Vagina (tissue), 2 donors: ENCODE measurements at regions of chr13 and their contacts with region 1.

Region 1: DNA sequence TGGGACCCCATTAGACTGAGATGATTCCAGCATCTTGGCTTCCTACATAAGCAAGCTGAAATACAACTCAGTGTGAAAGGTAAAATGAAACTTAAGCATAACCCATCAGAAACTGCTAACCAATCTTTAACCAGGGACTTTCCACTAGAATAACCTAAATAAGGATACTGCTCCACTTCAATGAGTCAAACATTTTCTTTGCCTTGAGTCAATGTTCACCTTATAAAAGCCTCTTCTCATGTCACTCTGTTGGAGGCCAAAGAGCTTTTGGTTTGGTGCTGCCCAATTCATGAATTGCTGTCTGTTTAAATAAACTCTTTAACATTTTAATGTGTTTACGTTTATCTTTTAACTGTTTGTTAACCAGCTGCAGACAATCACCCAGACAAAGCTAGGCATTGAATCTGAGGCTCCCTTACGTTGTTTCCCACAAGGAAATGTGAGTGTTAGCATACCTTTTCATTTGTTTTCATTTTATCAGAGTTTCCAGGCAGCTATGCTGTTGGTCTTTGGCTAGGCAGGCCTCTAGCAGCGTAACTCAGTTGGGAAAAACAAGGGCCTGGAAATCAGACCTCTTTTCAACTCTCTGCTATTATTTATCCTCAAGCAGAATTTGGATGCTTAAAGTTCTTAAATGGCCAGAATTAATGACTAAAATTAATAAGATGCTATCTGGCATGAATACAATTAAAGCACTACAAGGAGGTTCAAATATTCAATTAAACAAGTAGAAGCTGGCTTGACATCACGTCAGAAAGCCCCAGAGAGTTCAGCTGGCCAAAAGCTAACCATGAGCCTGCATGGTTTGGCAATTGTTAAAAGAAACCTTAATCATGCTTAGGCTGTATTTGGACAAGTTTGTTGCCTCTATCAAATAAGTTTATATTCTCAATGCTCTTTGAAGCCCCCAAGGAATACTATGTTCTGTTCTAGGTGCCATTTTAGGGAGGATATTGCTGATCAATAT is 200.2 kb downstream of the DCLK1 start:
- DNase-seq: no peak
- H3K4me3 ChIP-seq: no peak overlapping the region
- H3K27ac ChIP-seq: peak overlapping the region; percentile 14
- H3K4me1 ChIP-seq: peaks cover 25% of the 10 kb centered on the region
- H3K27me3 ChIP-seq: no peaks in the 10 kb centered on the region
- CTCF ChIP-seq: no peak
- POLR2A ChIP-seq: no peak

Region 2: DNA sequence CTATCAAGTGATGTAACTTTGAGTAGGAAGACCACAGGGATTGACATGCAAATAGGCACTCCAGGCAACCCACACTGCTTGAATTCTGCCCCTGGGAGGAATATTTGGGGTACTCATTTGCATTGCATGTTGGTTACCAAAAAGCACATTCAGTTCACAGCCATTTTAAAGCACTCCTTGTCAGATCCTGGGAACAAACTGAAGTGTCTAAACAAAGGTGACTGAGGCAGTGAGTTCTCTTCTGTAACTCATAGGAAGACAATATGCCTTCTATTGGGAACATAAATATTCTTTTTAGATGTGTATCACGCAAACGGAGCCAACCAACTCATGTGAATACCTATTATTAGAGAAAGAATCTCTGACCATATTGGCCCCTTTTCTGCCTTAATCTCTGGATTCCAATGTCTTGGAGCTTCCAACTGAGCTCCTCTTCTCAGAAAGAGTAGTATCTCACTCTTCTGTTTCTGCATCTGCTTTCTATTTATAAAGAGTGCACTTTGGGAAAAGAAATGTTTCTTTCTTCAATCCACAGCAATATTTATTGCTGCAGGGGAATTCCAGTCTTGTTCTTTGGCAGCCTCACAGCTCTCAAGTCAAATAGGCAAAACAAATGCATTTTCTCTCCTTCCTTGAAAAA is 1114.6 kb before region 1 on chr13:
- intact Hi-C with region 1: no loop called
- DNase-seq: no peak
- H3K4me3 ChIP-seq: no peak overlapping the region
- H3K27ac ChIP-seq: peak overlapping the region; percentile 63
- H3K4me1 ChIP-seq: peaks cover 15% of the 10 kb centered on the region
- H3K27me3 ChIP-seq: no peaks in the 10 kb centered on the region
- CTCF ChIP-seq: no peak
- POLR2A ChIP-seq: no peak

Region 3: DNA sequence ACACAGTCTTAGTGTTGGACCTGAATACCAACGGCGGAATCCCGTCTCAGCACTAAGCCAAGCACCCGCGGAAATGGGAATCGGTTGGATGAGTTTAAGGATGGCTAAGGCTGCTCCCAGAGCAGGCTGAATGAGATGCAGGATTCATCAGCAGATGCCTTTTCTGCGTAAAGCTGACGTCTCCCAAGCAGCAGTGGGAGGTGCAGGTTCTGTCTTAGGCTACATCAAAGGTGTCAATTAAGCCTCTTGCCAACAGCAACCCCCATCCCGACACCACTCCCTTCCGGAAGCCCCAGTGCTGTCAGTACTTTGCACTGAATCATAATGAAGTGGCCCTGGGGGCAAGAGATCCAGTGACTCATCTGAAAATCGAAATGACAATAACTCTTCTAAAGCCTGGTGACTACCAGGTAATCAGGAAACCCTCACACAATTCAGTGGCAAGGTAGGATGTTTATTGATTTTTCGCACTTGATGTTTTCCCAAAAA is 75.4 kb before region 1 on chr13:
- intact Hi-C with region 1: loop called (anchors 10 kb)
- DNase-seq: no peak
- H3K4me3 ChIP-seq: no peak overlapping the region
- H3K27ac ChIP-seq: no peak overlapping the region
- H3K4me1 ChIP-seq: peaks cover 37% of the 10 kb centered on the region
- H3K27me3 ChIP-seq: no peaks in the 10 kb centered on the region
- CTCF ChIP-seq: no peak
- POLR2A ChIP-seq: no peak

Region 4: DNA sequence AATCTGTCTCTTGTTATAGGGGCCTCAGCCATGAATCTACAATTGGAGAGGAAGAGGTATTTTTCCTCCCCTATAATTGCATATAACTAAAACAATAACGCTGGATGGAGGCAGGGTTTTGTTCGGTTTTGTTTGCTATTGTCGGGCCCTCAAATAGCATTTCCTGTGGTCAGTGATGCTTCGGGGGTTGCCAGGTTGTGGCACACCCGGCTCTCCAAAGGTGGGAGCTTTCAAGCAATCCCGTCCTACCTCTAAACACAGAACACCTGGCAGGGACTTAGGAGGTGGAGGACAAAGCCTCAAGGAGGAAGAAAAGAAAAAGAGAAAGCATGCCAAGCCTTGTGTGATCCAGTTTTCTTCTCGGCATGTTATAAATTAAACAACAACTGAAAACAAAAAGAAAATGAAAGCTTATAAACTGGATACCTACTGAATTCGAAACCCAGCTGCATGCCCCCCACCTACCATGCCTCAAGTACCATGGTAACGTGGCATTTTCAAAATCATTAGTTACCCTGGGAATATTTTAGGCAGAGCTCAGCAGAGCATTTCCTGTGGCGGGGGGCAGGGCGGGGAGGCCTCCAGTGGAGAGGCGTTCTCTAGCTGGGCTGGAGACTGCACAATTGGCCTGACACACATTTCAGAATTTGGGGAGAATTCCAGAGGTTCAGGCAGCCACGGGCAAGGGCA is 13.6 kb before region 1 on chr13:
- intact Hi-C with region 1: no loop called
- DNase-seq: no peak
- H3K4me3 ChIP-seq: peak overlapping the region in 1 of 2 donors; percentile 0
- H3K27ac ChIP-seq: peak overlapping the region; percentile 61
- H3K4me1 ChIP-seq: peaks cover 33% of the 10 kb centered on the region
- H3K27me3 ChIP-seq: no peaks in the 10 kb centered on the region
- CTCF ChIP-seq: no peak
- POLR2A ChIP-seq: no peak

Region 5: DNA sequence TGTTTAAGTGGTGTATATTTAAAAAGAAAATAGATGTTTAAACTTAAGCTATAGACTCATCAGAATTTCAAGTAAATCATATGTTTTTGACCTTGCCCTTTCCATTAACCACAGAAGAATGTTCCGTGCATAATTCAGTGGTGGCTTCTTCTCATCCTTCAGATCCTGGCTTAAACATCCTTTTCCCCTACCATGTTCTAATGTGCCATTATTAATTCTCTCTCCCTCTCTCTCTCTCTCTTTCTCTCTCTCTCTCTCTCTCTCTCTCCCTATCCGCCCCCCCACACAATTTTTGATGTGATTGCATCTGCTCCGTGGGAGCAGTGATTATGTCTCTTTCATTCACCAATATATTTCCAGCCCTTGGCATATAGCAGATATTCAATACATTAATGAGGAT is 83.8 kb after region 1 on chr13:
- intact Hi-C with region 1: no loop called
- DNase-seq: no peak
- H3K4me3 ChIP-seq: no peak overlapping the region
- H3K27ac ChIP-seq: no peak overlapping the region
- H3K4me1 ChIP-seq: no peaks in the 10 kb centered on the region
- H3K27me3 ChIP-seq: no peaks in the 10 kb centered on the region
- CTCF ChIP-seq: no peak
- POLR2A ChIP-seq: no peak

Region 6: GRCh38 chr13:36310417-36311108 is 379.6 kb after region 1 on chr13:
- intact Hi-C with region 1: no loop called
- DNase-seq: no peak
- H3K4me3 ChIP-seq: no peak overlapping the region
- H3K27ac ChIP-seq: no peak overlapping the region
- H3K4me1 ChIP-seq: no peaks in the 10 kb centered on the region
- H3K27me3 ChIP-seq: no peaks in the 10 kb centered on the region
- CTCF ChIP-seq: no peak
- POLR2A ChIP-seq: no peak